Left ventricle myocardium inferior (tissue), 1 donor: ENCODE measurements at regions of chr9 and their contacts with region 1.

Region 1: GRCh38 chr9:34546834-34547827 is 24.3 kb upstream of the ENHO start:
- DNase-seq: peak; percentile 46
- H3K4me3 ChIP-seq: no peak overlapping the region
- H3K27ac ChIP-seq: no peak overlapping the region
- H3K4me1 ChIP-seq: no peaks in the 10 kb centered on the region
- H3K27me3 ChIP-seq: peaks cover 33% of the 10 kb centered on the region
- CTCF ChIP-seq: peak; percentile 76

Region 2: GRCh38 chr9:34591248-34591916 is 44.3 kb after region 1 on chr9:
- intact Hi-C with region 1: loop called (anchors 5 kb)
- DNase-seq: peak; percentile 88
- H3K4me3 ChIP-seq: peak overlapping the region; percentile 68
- H3K27ac ChIP-seq: peak overlapping the region; percentile 37
- H3K4me1 ChIP-seq: peaks cover 59% of the 10 kb centered on the region
- H3K27me3 ChIP-seq: peaks cover 71% of the 10 kb centered on the region
- CTCF ChIP-seq: peak; percentile 92